ENCODE measurements at regions of chr19 and their contacts with region 1.

Region 1: GRCh38 chr19:15251749-15252397 is 19.6 kb upstream of the EPHX3 start:
- DNase-seq: peak; percentile 46 to 84
- H3K4me3 ChIP-seq: no peak overlapping the region; a peak in 2 of 8 replicates
- H3K27ac ChIP-seq: no peak overlapping the region
- H3K4me1 ChIP-seq: peaks cover 0 to 15% (median 4%) of the 10 kb centered on the region in 4 experiments; a peak in 5 of 7 replicates
- H3K27me3 ChIP-seq: no peaks in the 10 kb centered on the region
- CTCF ChIP-seq: peak; percentile 67 to 71 (median 71)
- EP300 ChIP-seq: no peak
- POLR2A ChIP-seq: no peak
- RAD21 ChIP-seq: peak; percentile 38 to 52

Region 2: DNA sequence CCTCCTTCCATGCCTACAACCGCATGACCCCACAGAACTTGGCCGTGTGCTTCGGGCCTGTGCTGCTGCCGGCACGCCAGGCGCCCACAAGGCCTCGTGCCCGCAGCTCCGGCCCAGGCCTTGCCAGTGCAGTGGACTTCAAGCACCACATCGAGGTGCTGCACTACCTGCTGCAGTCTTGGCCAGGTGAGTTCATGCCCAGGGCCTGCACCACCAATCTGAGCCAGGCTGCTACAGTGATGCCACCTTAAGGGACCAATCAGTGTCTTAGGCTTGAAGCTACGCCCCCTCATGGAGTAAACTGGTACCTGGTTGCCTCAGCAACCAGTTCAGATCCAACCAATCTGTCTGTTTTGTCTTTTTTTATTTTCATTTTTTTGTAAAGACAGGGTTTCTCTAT is 139.5 kb before region 1 on chr19:
- CTCF ChIA-PET with region 1: no interaction called
- POLR2A ChIA-PET with region 1: no interaction called
- DNase-seq: peak in 1 of 2 experiments; percentile 50
- H3K4me3 ChIP-seq: no peak overlapping the region
- H3K27ac ChIP-seq: no peak overlapping the region
- H3K4me1 ChIP-seq: peaks cover 4 to 10% (median 6%) of the 10 kb centered on the region in 4 experiments
- H3K27me3 ChIP-seq: no peaks in the 10 kb centered on the region
- CTCF ChIP-seq: peak in 2 of 3 experiments; percentile 18 to 38; a peak in 2 of 4 replicates
- EP300 ChIP-seq: no peak
- POLR2A ChIP-seq: no peak
- RAD21 ChIP-seq: no peak

Region 3: DNA sequence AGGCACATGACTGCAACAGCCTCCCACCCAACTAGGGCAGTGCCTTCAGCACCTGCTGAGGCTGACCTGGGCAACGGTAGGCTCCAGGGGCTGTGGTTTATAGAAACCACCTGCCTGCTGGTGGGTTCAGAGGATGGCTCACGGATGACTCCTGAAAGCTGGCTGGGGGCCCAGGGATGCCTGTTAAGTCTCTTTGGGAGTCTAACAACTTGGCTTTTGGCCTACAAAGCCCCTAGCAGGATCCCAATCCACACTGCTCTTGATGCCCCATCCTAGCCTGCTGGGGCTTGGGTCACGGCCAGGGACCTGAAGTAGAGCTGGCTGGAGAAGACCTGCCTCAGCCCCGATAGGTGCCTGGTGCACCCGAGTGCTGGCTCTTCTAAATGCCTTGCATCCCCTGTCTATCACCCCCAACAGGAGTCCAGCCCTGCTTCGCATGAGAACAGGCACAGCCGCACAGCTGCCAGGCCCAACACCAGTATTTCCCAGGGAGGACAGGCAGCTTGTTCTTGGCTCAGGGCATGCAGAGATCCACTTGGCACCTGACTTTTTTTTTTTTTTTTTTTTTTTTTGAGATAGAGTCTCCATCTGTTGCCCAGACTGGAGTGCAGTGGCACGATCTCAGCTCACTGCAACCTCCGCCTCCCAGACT is 10.5 kb before region 1 on chr19:
- CTCF ChIA-PET with region 1: interaction called, 81 read pairs
- POLR2A ChIA-PET with region 1: interaction called, 21 read pairs
- DNase-seq: no peak
- H3K4me3 ChIP-seq: no peak overlapping the region
- H3K27ac ChIP-seq: no peak overlapping the region
- H3K4me1 ChIP-seq: no peaks in the 10 kb centered on the region
- H3K27me3 ChIP-seq: no peaks in the 10 kb centered on the region
- CTCF ChIP-seq: no peak
- EP300 ChIP-seq: no peak
- POLR2A ChIP-seq: no peak
- RAD21 ChIP-seq: no peak

Region 4: DNA sequence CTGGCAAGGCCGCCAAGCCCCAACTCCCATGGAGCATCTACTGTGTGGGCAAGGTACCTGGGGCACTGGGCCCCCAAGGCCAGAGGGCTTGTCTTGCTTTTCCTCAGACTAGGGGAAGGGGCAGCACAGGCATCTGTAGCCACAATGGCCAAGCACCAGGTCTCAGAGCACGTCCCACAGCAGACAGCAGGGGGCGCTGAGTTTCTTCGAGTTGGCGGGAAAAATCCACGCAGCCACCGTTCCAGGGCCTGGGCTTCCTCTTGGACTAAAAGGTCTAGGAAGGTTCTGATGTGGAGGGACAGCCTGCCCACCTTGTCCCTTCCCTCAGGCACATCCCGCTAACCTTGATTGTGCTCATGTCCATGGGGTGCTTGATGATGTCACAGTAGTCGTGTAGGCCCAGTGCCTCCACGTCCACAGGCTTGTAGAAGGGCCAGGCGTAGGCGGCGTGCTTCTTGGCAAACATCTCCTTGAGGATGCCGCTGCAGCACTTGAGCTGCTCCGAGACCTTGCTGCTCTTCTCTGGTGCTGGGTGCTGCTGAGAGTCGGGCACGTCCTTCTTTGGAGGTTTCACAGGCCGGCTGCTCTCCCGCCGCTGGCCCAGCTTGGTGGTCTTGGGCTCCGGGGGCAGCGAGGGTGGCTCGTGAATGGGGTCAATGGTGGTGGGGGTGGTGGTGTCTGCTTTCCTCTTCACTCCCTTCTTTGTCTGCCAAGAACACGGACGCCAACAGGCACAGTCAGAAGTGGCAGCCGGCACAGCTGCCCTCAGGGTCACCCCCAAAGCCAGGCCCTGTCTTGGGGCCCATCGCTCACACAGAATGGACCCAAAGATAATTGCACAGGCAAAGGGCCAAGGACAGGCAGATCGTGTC is 12.4 kb after region 1 on chr19:
- CTCF ChIA-PET with region 1: interaction called, 33 read pairs
- POLR2A ChIA-PET with region 1: interaction called, 3 read pairs
- DNase-seq: peak; percentile 51 to 93
- H3K4me3 ChIP-seq: no peak overlapping the region
- H3K27ac ChIP-seq: 0 out of 2 replicates have a peak overlapping the region, but pooled peaks have one; percentile 12
- H3K4me1 ChIP-seq: no peaks in the 10 kb centered on the region
- H3K27me3 ChIP-seq: no peaks in the 10 kb centered on the region
- CTCF ChIP-seq: peak; percentile 80 to 90 (median 82)
- EP300 ChIP-seq: no peak
- POLR2A ChIP-seq: no peak
- RAD21 ChIP-seq: peak; percentile 75 to 76

Measured in H1 (cell line).